ENCODE measurements at regions of chr1 and their contacts with region 1.

Region 1: GRCh38 chr1:166910396-166910994 is 34.4 kb upstream of the TADA1 start:
- DNase-seq: peak; percentile 98
- H3K4me3 Mint-ChIP-seq: no peak overlapping the region
- H3K27ac Mint-ChIP-seq: no peak overlapping the region
- H3K4me1 Mint-ChIP-seq: no peaks in the 10 kb centered on the region
- H3K27me3 Mint-ChIP-seq: no peaks in the 10 kb centered on the region
- CTCF ChIP-seq: peak; percentile 91

Region 2: DNA sequence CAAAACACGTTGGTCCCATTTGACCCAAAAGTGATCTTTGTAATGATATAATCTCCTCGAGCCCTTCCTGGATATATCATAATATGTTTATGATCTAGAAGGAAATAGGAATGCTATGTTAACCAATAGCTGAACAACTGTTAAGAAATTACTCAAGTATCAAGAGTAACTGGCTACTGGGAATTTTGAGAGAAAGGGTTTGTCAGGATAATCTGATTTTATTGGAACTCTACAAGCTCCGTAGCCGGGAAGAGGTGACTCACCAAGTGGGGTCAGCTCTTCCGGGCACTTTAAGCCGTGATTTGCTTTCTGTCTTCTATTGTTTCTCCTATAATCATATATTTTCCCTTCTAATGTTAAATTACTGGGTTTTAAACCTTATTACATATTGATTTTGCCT is 321.8 kb before region 1 on chr1:
- CTCF ChIA-PET with region 1: no interaction called
- POLR2A ChIA-PET with region 1: no interaction called
- intact Hi-C with region 1: no loop called
- DNase-seq: peak; percentile 30
- H3K4me3 Mint-ChIP-seq: no peak overlapping the region
- H3K27ac Mint-ChIP-seq: no peak overlapping the region
- H3K4me1 Mint-ChIP-seq: no peaks in the 10 kb centered on the region
- H3K27me3 Mint-ChIP-seq: peaks cover 9% of the 10 kb centered on the region
- CTCF ChIP-seq: no peak

Region 3: GRCh38 chr1:166875734-166876539 is 34.6 kb before region 1 on chr1 and contains the start of gene TADA1:
- CTCF ChIA-PET with region 1: interaction called, 24 read pairs
- POLR2A ChIA-PET with region 1: interaction called, 9 read pairs
- intact Hi-C with region 1: no loop called
- DNase-seq: peak; percentile 100
- H3K4me3 Mint-ChIP-seq: peak within 1 kb of the TSS; percentile 92
- H3K27ac Mint-ChIP-seq: peak within 1 kb of the TSS; percentile 95
- H3K4me1 Mint-ChIP-seq: peaks cover 38% of the 10 kb centered on the region
- H3K27me3 Mint-ChIP-seq: no peaks in the 10 kb centered on the region
- CTCF ChIP-seq: no peak
- total RNA-seq, gene TADA1: 14.7 and 15.9 TPM in 2 replicates

Region 4: GRCh38 chr1:166920561-166921475 is 10.3 kb after region 1 on chr1:
- CTCF ChIA-PET with region 1: interaction called, 28 read pairs
- POLR2A ChIA-PET with region 1: interaction called, 5 read pairs
- intact Hi-C with region 1: no loop called
- DNase-seq: no peak
- H3K4me3 Mint-ChIP-seq: no peak overlapping the region
- H3K27ac Mint-ChIP-seq: no peak overlapping the region
- H3K4me1 Mint-ChIP-seq: peaks cover 8% of the 10 kb centered on the region
- H3K27me3 Mint-ChIP-seq: no peaks in the 10 kb centered on the region
- CTCF ChIP-seq: no peak

Region 5: DNA sequence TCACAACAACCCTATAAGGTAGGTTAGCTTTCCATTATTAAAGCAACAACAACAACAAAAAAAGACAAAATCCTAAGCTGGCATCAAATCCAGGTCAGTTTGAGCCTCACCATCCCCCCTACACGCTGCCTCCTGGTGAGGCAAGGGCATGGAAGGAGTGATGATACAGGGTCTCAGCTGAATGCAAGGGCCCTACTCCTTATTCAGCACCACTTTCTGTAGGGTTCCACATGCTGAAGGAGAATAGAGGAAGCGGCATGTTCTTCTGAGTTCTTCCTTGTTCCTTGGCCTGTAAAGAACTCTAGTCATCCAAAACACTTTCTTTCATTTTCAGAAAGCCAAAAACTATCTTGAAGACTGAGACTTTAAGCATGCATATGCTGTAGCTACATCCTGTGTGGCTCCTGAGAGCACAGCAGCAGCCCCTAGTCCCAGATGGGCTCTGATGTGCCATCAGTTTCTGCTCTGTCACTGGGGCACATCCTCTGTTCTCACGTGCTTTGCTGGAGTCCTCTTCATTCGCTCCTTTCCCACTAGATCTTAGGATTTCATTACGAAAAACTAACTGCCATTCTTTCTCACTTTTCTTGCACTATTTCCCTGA is 58.7 kb after region 1 on chr1:
- CTCF ChIA-PET with region 1: interaction called, 31 read pairs
- POLR2A ChIA-PET with region 1: interaction called, 4 read pairs
- intact Hi-C with region 1: no loop called
- DNase-seq: no peak
- H3K4me3 Mint-ChIP-seq: no peak overlapping the region
- H3K27ac Mint-ChIP-seq: no peak overlapping the region
- H3K4me1 Mint-ChIP-seq: peaks cover 8% of the 10 kb centered on the region
- H3K27me3 Mint-ChIP-seq: peaks cover 83% of the 10 kb centered on the region
- CTCF ChIP-seq: no peak

Region 6: GRCh38 chr1:167043752-167044488 is 133.4 kb after region 1 on chr1:
- CTCF ChIA-PET with region 1: interaction called, 21 read pairs
- POLR2A ChIA-PET with region 1: interaction called, 8 read pairs
- intact Hi-C with region 1: no loop called
- DNase-seq: peak; percentile 83
- H3K4me3 Mint-ChIP-seq: peak overlapping the region; percentile 78
- H3K27ac Mint-ChIP-seq: peak overlapping the region; percentile 32
- H3K4me1 Mint-ChIP-seq: peaks cover 14% of the 10 kb centered on the region
- H3K27me3 Mint-ChIP-seq: no peaks in the 10 kb centered on the region
- CTCF ChIP-seq: no peak

Region 7: GRCh38 chr1:167442124-167442848 is 531.8 kb after region 1 on chr1:
- CTCF ChIA-PET with region 1: interaction called, 5 read pairs
- POLR2A ChIA-PET with region 1: no interaction called
- intact Hi-C with region 1: loop called (anchors 2 kb)
- DNase-seq: peak; percentile 94
- H3K4me3 Mint-ChIP-seq: no peak overlapping the region
- H3K27ac Mint-ChIP-seq: no peak overlapping the region
- H3K4me1 Mint-ChIP-seq: peaks cover 6% of the 10 kb centered on the region
- H3K27me3 Mint-ChIP-seq: peaks cover 18% of the 10 kb centered on the region
- CTCF ChIP-seq: peak; percentile 98

Measured in MCF 10A (cell line).